CD8-positive, alpha-beta T cell (primary cell): ENCODE measurements at regions of chr1 and their contacts with region 1.

Region 1: DNA sequence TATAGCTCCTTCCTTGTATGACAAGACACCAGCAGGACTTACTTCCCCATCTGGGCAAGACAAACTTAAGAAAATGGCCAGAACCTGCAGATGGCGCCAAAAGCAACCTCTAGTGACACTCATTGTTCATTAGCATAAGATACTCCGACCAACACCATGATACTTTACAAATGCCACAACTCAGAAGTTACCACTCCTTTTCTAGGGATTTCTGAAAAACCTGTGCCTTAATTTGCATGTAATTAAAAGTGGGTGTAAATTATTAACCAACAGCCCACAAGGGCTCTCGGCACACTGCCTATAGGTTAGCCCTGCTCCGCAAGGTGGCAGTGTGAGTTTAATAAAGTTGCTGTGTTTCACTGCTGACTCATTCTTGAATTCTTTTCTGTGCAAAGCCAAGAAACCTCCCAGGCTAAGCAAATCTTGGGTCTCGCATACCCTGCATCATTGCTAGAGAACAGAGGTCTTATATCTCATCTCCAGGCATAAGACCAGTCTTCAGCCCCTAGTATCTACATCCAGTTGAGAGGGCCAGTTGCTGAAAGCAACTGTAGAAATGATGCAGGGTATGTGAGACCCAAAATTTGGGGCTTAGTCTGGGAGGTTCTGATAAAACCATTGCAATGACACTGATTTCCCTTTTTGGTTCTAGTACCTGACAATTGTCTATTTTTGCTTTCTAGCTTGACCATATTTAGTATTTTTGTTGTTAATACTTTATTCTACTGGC is 86.4 kb downstream of the FAF1 start:
- DNase-seq: peak; percentile 31 to 71 (median 56)
- ATAC-seq: peak; percentile 62
- H3K4me3 ChIP-seq: no peak overlapping the region
- H3K4me3 Mint-ChIP-seq: peak overlapping the region; percentile 62
- H3K27ac ChIP-seq: no peak overlapping the region
- H3K27ac Mint-ChIP-seq: no peak overlapping the region
- H3K4me1 ChIP-seq: no peaks in the 10 kb centered on the region
- H3K4me1 Mint-ChIP-seq: peaks cover 21% of the 10 kb centered on the region
- H3K27me3 ChIP-seq: no peaks in the 10 kb centered on the region
- H3K27me3 Mint-ChIP-seq: no peaks in the 10 kb centered on the region
- CTCF ChIP-seq: peak; percentile 68

Region 2: DNA sequence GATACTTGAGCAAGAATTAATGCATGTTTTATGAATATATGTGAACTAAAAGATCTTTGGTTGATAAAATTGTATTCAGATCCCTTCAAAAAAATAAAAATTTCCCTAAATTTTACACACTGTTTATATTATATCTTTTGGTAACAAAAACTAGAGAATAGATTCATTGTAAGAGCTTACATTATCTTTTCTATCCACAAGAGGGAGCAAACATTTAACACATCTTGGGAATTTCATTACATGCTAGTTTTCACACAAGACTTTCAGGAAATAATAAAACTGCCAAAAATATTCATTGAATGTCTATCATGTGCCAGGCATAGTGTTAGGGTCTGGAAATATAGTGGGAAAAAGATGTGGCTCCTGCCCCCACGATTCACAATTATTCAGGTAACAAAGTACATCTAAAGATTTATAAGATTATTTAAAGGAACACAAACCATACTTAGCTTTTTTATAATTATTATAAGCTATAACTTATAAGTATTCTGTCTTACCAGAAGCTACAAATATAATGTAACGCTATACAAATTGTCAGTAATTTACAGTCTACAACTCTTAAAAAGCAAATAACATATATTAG is 55.8 kb after region 1 on chr1:
- CTCF ChIA-PET with region 1: interaction called, 4 read pairs
- POLR2A ChIA-PET with region 1: no interaction called
- intact Hi-C with region 1: loop called in 1 of 2 experiments (anchors 10 kb)
- DNase-seq: peak in 2 of 9 experiments; percentile 30 to 50
- ATAC-seq: no peak
- H3K4me3 ChIP-seq: no peak overlapping the region
- H3K4me3 Mint-ChIP-seq: no peak overlapping the region
- H3K27ac ChIP-seq: no peak overlapping the region
- H3K27ac Mint-ChIP-seq: no peak overlapping the region
- H3K4me1 ChIP-seq: no peaks in the 10 kb centered on the region
- H3K4me1 Mint-ChIP-seq: peaks cover 29% of the 10 kb centered on the region
- H3K27me3 ChIP-seq: no peaks in the 10 kb centered on the region
- H3K27me3 Mint-ChIP-seq: no peaks in the 10 kb centered on the region
- CTCF ChIP-seq: peak; percentile 71

Region 3: DNA sequence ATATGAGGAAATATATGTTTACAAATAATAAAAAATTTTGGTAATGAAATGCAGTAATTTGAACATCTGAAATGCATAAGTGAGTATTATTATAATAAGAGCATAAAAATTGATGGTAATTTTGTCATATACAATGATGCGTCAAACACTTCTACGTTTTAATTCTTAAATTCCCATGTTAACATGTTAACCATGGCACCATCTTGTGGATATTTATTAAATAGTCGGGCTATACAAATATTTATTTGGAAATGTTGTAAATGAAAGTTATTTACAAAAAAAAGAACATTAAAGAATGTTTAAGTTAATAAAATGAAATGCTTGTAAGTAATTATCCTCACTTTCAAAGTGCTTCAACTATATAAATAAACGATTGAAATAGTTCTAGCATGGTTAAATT is 171.2 kb after region 1 on chr1:
- CTCF ChIA-PET with region 1: interaction called, 3 read pairs
- POLR2A ChIA-PET with region 1: no interaction called
- intact Hi-C with region 1: loop called (anchors 2 to 5 kb)
- DNase-seq: peak in 2 of 9 experiments; percentile 6 to 22
- ATAC-seq: no peak
- H3K4me3 ChIP-seq: no peak overlapping the region
- H3K4me3 Mint-ChIP-seq: no peak overlapping the region
- H3K27ac ChIP-seq: no peak overlapping the region
- H3K27ac Mint-ChIP-seq: no peak overlapping the region
- H3K4me1 ChIP-seq: no peaks in the 10 kb centered on the region
- H3K4me1 Mint-ChIP-seq: no peaks in the 10 kb centered on the region
- H3K27me3 ChIP-seq: peaks cover 0 to 2% of the 10 kb centered on the region in 2 experiments
- H3K27me3 Mint-ChIP-seq: peaks cover 11% of the 10 kb centered on the region
- CTCF ChIP-seq: no peak

Region 4: GRCh38 chr1:51139474-51139873 is 265.9 kb after region 1 on chr1:
- CTCF ChIA-PET with region 1: interaction called, 3 read pairs
- POLR2A ChIA-PET with region 1: no interaction called
- intact Hi-C with region 1: loop called in 1 of 2 experiments (anchors 5 kb)
- DNase-seq: no peak
- ATAC-seq: no peak
- H3K4me3 ChIP-seq: no peak overlapping the region
- H3K4me3 Mint-ChIP-seq: no peak overlapping the region
- H3K27ac ChIP-seq: no peak overlapping the region
- H3K27ac Mint-ChIP-seq: no peak overlapping the region
- H3K4me1 ChIP-seq: no peaks in the 10 kb centered on the region
- H3K4me1 Mint-ChIP-seq: no peaks in the 10 kb centered on the region
- H3K27me3 ChIP-seq: no peaks in the 10 kb centered on the region
- H3K27me3 Mint-ChIP-seq: peaks cover 16% of the 10 kb centered on the region
- CTCF ChIP-seq: no peak